ENCODE measurements at regions of chr13 and their contacts with region 1.

Region 1: DNA sequence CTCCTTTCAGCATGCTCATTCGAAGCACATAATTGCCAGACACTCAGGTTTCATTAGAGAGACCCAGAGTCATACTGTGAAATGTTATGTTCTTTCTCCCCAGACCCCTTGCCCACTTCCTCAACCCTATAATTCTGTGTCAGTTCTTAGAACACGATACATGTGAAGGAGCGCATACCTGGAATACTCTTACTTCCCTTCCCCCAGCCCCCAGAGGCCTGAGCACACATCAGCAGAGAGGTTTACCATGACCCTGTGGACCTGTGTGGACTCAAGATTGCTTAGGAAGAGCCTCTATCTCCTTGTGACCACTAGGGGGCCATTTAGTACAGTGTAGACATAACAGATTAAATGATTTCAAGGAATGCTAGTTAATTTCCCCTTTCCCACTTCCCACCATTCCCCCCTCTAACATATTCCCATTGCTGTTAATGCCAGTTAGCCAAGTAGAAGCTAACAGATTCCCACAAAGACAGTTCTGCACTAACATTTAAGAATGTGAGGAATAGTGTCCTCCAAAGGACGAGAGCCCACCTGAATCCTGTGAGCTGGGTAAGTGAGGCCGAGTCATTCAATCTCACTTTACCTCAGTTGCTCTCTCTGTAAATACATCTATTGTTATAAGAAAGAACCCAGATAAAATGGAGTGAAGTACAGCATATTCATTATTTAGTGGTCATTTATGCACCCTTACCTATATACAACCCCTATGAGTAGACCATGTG is 154.2 kb upstream of the MAB21L1 start:
- DNase-seq: no peak
- H3K4me3 ChIP-seq: no peak overlapping the region
- H3K27ac ChIP-seq: no peak overlapping the region
- H3K4me1 ChIP-seq: no peaks in the 10 kb centered on the region
- H3K27me3 ChIP-seq: no peaks in the 10 kb centered on the region
- CTCF ChIP-seq: peak; percentile 78

Region 2: GRCh38 chr13:35530147-35530546 is 100.6 kb before region 1 on chr13:
- intact Hi-C with region 1: no loop called
- DNase-seq: peak; percentile 20
- H3K4me3 ChIP-seq: no peak overlapping the region
- H3K27ac ChIP-seq: no peak overlapping the region
- H3K4me1 ChIP-seq: peaks cover 14% of the 10 kb centered on the region
- H3K27me3 ChIP-seq: no peaks in the 10 kb centered on the region
- CTCF ChIP-seq: no peak

Region 3: DNA sequence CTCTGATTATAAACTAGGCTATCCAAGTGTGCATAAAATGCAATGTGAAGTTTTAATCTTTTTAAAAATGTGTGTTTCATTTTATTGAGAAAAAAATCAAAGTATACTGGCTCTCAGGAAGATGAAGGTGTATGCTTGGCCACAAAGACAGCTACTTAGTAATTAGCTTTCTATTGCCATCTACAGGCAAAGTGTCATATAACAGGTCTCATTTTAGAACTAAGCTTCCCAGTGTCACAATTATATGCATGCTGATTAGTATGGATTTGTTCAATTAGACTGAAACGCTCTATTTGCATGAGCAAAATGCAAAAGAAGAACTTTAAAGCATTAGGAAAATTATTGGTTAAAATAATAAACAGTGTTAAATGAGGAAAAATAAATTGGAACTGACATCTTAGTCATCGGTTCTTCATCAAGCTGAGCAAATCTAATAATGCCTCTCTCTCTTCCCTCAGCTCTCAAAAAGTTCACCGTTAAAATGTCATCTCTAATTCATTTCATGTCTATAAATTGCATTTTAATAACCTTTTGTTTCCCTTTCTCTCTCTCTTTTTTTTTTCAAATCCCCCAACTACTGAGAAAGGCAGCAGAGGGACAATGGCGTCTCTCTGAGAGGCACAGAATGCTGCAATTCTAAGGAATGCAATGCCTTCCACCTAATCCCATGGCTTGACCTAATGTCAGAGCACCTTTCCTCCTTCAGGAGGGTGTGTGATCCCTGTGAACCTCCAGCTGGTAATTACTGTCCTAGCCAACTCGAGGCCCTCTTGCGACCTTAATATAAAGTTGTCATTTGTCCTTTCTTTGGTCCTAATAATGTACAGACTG is 158.8 kb after region 1 on chr13:
- intact Hi-C with region 1: loop called (anchors 10 kb)
- DNase-seq: no peak
- H3K4me3 ChIP-seq: no peak overlapping the region
- H3K27ac ChIP-seq: no peak overlapping the region
- H3K4me1 ChIP-seq: peaks cover 9% of the 10 kb centered on the region
- H3K27me3 ChIP-seq: no peaks in the 10 kb centered on the region
- CTCF ChIP-seq: peak; percentile 70

Region 4: GRCh38 chr13:36107521-36108107 is 476.9 kb after region 1 on chr13:
- intact Hi-C with region 1: no loop called
- DNase-seq: no peak
- H3K4me3 ChIP-seq: no peak overlapping the region
- H3K27ac ChIP-seq: no peak overlapping the region
- H3K4me1 ChIP-seq: no peaks in the 10 kb centered on the region
- H3K27me3 ChIP-seq: no peaks in the 10 kb centered on the region
- CTCF ChIP-seq: no peak

Measured in left ventricle myocardium inferior (tissue), 1 donor.